ENCODE measurements at regions of chr10 and their contacts with region 1.

Region 1: DNA sequence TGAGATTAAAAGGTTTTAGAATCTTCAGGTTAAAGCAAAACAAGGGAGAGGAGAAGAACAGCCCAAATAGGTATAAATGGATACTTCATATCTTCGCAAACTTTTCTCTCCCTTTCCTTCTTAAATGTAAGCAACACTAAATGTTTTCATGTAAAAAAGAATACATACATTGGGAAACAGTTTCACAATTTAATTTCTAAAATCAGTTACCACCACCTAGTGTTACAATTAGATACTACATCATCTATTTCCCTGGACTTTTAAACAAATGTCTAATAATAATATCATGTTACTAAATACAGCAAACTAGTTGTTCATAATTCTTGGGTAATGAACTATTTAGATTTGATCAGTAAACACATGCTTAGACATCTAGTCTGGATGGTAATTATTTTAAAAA is 35.8 kb downstream of the MINDY3 start:
- DNase-seq: no peak
- H3K4me3 ChIP-seq: no peak overlapping the region
- H3K27ac ChIP-seq: no peak overlapping the region
- H3K4me1 ChIP-seq: peaks cover 0 to 11% (median 0%) of the 10 kb centered on the region in 4 donors
- H3K27me3 ChIP-seq: no peaks in the 10 kb centered on the region
- CTCF ChIP-seq: peak; percentile 61 to 66

Region 2: DNA sequence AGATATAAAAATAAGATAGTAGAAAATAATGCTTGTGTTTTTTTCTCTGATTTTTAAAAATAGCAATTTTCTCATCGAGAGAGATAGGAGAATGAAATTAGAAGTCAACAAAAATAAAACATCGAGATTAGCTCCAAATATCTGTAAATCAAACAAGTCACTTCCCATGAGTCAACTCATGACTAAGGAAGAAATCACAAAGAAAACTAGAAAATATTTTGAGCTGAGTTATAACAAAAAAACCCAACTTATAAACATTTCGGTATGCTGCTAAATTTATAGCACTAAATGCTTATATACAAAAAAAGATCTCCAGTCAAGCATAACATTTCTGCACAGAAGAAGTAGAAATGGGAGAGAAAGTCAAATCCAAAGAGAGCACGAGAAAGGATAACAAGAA is 244.9 kb before region 1 on chr10:
- intact Hi-C with region 1: loop called (anchors 5 kb)
- DNase-seq: no peak
- H3K4me3 ChIP-seq: no peak overlapping the region
- H3K27ac ChIP-seq: peak overlapping the region in 1 of 2 donors; percentile 34
- H3K4me1 ChIP-seq: peaks cover 0 to 19% (median 2%) of the 10 kb centered on the region in 4 donors
- H3K27me3 ChIP-seq: no peaks in the 10 kb centered on the region
- CTCF ChIP-seq: no peak